ENCODE measurements at regions of chr7 and their contacts with region 1.

Region 1: DNA sequence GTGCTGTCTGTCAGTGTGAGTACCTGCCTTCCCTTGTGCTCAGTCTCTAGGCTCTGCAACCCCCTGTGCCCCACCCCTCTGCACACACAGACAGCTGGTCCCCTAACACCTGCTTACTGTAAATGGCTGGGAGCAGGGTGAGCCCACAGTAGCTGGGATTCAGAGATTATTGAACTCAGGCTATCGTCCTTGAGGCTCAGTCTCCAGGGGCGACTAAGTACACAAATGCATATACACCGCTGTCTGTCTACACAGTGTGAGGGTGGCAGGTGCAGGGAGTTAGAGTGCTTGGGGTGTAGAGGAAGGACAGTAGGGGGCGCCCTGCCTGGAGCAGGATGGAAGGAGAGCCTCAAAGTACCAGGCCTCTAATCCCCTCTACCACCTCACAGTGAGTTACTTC is 12.9 kb downstream of the UPP1 start:
- DNase-seq: no peak
- ATAC-seq: no peak
- H3K4me3 ChIP-seq: no peak overlapping the region
- H3K4me3 Mint-ChIP-seq: peak overlapping the region in 1 of 10 donors; percentile 45
- H3K27ac ChIP-seq: peak overlapping the region; percentile 11
- H3K27ac Mint-ChIP-seq: peak overlapping the region; percentile 53 to 95 (median 78)
- H3K4me1 ChIP-seq: peaks cover 31 to 50% of the 10 kb centered on the region in 2 donors
- H3K4me1 Mint-ChIP-seq: peaks cover 37 to 59% (median 50%) of the 10 kb centered on the region in 7 donors
- H3K27me3 ChIP-seq: no peaks in the 10 kb centered on the region
- H3K27me3 Mint-ChIP-seq: no peaks in the 10 kb centered on the region

Region 2: GRCh38 chr7:47979145-47979831 is 122.7 kb before region 1 on chr7 and contains the start of gene HUS1:
- CTCF ChIA-PET with region 1: no interaction called
- POLR2A ChIA-PET with region 1: interaction called, 4 read pairs
- intact Hi-C with region 1: loop called in 1 of 2 experiments (anchors 1 kb)
- DNase-seq: peak; percentile 86 to 95 (median 90)
- ATAC-seq: peak; percentile 100
- H3K4me3 ChIP-seq: peak within 1 kb of the TSS; percentile 90
- H3K4me3 Mint-ChIP-seq: peak within 1 kb of the TSS; percentile 81 to 99 (median 94)
- H3K27ac ChIP-seq: peak within 1 kb of the TSS; percentile 94
- H3K27ac Mint-ChIP-seq: peak within 1 kb of the TSS; percentile 93 to 100 (median 99)
- H3K4me1 ChIP-seq: peaks cover 10 to 13% of the 10 kb centered on the region in 2 donors
- H3K4me1 Mint-ChIP-seq: peaks cover 16 to 38% (median 32%) of the 10 kb centered on the region in 7 donors
- H3K27me3 ChIP-seq: no peaks in the 10 kb centered on the region
- H3K27me3 Mint-ChIP-seq: no peaks in the 10 kb centered on the region
- total RNA-seq, gene HUS1: 39.2 to 84.0 (median 79.2) TPM

Region 3: GRCh38 chr7:48035301-48035966 is 66.5 kb before region 1 on chr7 and contains the start of gene C7orf57:
- CTCF ChIA-PET with region 1: no interaction called
- POLR2A ChIA-PET with region 1: no interaction called
- intact Hi-C with region 1: loop called in 1 of 2 experiments (anchors 2 kb)
- DNase-seq: peak; percentile 80 to 88 (median 83)
- ATAC-seq: peak; percentile 99
- H3K4me3 ChIP-seq: peak within 1 kb of the TSS; percentile 63
- H3K4me3 Mint-ChIP-seq: peak within 1 kb of the TSS; percentile 83 to 92 (median 88)
- H3K27ac ChIP-seq: peak within 1 kb of the TSS; percentile 34
- H3K27ac Mint-ChIP-seq: peak within 1 kb of the TSS in 7 of 9 donors; percentile 71 to 89 (median 80)
- H3K4me1 ChIP-seq: peaks cover 8 to 9% of the 10 kb centered on the region in 2 donors
- H3K4me1 Mint-ChIP-seq: peaks cover 4 to 14% (median 9%) of the 10 kb centered on the region in 7 donors
- H3K27me3 ChIP-seq: peaks cover 0 to 5% of the 10 kb centered on the region in 2 donors
- H3K27me3 Mint-ChIP-seq: peaks cover 9 to 60% (median 22%) of the 10 kb centered on the region in 5 donors
- total RNA-seq, gene C7orf57: 0.17 to 0.80 TPM in 2 of 5 experiments, not detected in the others